Activated T-helper 1 cell treated with anti-CD3 and anti-CD28 coated beads, Interleukin-12 subunit alpha, Interleukin-12 subunit beta, Interleukin-2, Interleukin-4 antibody, amounts not matched to agents 30 ng/mL and 10 ng/mL and 1 ng/mL, durations not matched to agents 14 hours and 24 hours and 36 hours (primary cell): ENCODE measurements at regions of chr11 and their contacts with region 1.

Region 1: GRCh38 chr11:10455637-10456487 is 798 bp downstream of the AMPD3 start:
- DNase-seq: peak; percentile 72
- H3K4me3 Mint-ChIP-seq: peak overlapping the region; percentile 86
- H3K27ac Mint-ChIP-seq: peak overlapping the region; percentile 87
- H3K4me1 Mint-ChIP-seq: peaks cover 80% of the 10 kb centered on the region
- H3K27me3 Mint-ChIP-seq: peaks cover 3% of the 10 kb centered on the region

Region 2: GRCh38 chr11:8688414-8689362 is 1767.2 kb before region 1 on chr11:
- intact Hi-C with region 1: loop called (anchors 10 kb)
- DNase-seq: peak; percentile 82
- H3K4me3 Mint-ChIP-seq: peak overlapping the region; percentile 94
- H3K27ac Mint-ChIP-seq: peak overlapping the region; percentile 91
- H3K4me1 Mint-ChIP-seq: peaks cover 60% of the 10 kb centered on the region
- H3K27me3 Mint-ChIP-seq: no peaks in the 10 kb centered on the region

Region 3: GRCh38 chr11:9757809-9758636 is 697.8 kb before region 1 on chr11:
- intact Hi-C with region 1: loop called (anchors 5 kb)
- DNase-seq: peak; percentile 87
- H3K4me3 Mint-ChIP-seq: peak overlapping the region; percentile 80
- H3K27ac Mint-ChIP-seq: peak overlapping the region; percentile 76
- H3K4me1 Mint-ChIP-seq: peaks cover 57% of the 10 kb centered on the region
- H3K27me3 Mint-ChIP-seq: peaks cover 2% of the 10 kb centered on the region

Region 4: GRCh38 chr11:10413268-10413667 is 42.6 kb before region 1 on chr11:
- intact Hi-C with region 1: loop called (anchors 2 kb)
- DNase-seq: peak; percentile 22
- H3K4me3 Mint-ChIP-seq: no peak overlapping the region
- H3K27ac Mint-ChIP-seq: no peak overlapping the region
- H3K4me1 Mint-ChIP-seq: peaks cover 33% of the 10 kb centered on the region
- H3K27me3 Mint-ChIP-seq: peaks cover 11% of the 10 kb centered on the region

Region 5: GRCh38 chr11:10490398-10491241 is 34.8 kb after region 1 on chr11:
- intact Hi-C with region 1: no loop called
- DNase-seq: no peak
- H3K4me3 Mint-ChIP-seq: no peak overlapping the region
- H3K27ac Mint-ChIP-seq: no peak overlapping the region
- H3K4me1 Mint-ChIP-seq: peaks cover 26% of the 10 kb centered on the region
- H3K27me3 Mint-ChIP-seq: no peaks in the 10 kb centered on the region

Region 6: DNA sequence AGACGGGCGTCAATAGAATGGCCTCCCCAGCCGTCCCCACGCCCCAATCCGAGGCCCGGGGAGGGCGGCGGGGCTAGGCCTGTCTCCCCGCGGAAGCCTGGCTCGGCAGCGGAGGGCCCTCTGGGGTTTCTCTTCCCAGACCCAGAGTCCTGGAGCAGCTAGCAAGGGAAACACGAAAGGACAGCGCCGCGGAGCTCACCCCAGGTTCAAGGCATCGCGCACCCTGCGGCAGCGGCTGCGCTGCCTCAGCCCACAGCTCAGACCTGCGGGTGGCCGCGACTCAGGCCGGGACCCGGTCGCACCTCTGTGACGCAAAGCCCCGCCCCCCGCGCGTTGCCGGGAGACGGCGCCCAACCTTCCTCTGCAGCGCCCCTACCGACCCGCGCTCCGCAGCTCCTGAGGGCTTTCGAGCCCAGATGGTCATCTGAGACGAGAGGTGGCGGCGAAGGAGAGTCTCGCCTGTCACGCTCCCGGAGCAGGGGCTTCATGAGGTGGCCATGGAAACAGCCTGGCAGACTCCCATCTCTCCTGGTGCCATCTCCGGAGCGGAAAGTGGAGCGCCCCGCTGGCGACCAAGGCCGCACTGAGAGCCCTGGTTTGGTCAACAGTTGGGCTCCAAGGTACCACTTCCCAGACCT is 85.2 kb after region 1 on chr11 and contains the start of gene RNF141:
- intact Hi-C with region 1: loop called (anchors 1 kb)
- DNase-seq: peak; percentile 92
- H3K4me3 Mint-ChIP-seq: peak within 1 kb of the TSS; percentile 90
- H3K27ac Mint-ChIP-seq: peak within 1 kb of the TSS; percentile 73
- H3K4me1 Mint-ChIP-seq: peaks cover 29% of the 10 kb centered on the region
- H3K27me3 Mint-ChIP-seq: peaks cover 5% of the 10 kb centered on the region
- total RNA-seq, gene RNF141: 12.4 and 13.2 TPM in 2 replicates

Region 7: DNA sequence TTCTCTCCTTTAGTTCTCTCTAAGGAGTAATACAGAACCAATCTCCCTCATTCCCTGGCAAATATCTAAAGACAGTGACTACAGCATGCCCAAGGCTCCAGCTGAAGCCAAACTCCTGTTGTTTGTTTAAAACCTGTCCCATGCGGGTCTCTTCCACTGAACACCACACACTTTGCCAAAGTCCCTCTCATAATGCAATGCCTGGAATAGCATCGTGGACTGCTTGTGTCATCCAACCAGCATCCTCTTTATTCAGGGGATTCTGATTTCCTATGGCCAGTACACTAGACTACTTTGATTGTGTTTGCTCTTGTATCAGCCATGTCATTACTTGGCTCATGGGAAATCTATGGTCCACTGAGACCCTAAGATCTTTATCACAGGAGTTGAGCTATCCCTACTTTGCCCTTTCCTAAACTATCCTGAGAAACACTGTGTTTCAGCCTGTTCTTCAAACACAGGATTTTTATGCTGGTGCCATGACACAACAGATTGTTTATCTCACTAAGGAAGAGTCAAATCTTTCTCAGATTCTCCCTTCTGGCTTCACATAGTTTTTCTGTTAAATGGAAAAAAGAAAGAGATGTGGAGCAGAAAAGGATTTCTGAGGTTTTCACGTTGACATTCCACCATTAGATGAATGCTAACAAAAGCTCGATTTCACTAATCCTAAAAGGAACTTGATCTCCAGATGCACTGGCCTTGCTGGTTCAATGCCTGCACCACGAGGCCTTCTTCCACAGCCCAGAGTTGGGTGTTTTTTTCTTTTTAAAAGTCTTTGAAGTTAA is 253.6 kb after region 1 on chr11:
- intact Hi-C with region 1: no loop called
- DNase-seq: no peak
- H3K4me3 Mint-ChIP-seq: no peak overlapping the region
- H3K27ac Mint-ChIP-seq: no peak overlapping the region
- H3K4me1 Mint-ChIP-seq: no peaks in the 10 kb centered on the region
- H3K27me3 Mint-ChIP-seq: peaks cover 4% of the 10 kb centered on the region

Region 8: DNA sequence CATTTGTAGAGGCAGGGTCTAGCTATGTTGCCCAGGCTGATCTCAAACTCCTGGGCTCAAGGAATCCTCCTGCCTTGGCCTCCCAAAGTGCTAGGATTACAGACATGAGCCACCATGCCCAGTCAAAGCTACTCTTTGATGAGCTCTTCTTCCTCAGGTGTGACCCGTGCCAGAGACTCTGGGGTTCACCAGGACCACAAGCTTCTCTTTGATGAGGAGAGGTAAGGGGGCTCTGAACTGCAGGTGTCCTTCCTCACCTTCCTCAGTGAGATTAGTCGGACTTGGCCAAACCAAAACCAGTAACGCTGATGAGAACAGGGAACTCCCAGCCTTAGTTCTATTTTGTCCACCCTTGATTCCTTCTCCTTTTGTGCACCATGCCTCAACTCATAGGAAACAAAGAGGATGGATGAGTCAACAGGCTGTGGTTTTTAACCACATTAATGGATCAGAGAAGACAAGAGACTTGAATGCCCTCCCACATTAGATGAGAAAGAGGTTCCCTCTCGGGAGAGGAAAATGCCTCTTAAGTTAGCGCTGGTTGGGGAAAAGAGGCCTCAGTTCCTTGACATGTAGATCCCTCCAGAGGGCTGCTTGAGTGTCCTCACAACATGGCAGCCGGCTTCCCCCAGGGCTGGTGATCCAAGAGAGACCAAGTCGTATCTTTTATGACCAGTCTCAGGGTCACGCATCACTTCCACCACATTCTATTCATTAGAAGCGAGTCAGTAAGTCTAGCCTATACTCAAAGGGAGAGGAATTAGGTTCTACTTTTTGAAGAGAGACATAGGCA is 269.4 kb after region 1 on chr11:
- intact Hi-C with region 1: loop called (anchors 1 kb)
- DNase-seq: no peak
- H3K4me3 Mint-ChIP-seq: peak overlapping the region; percentile 47
- H3K27ac Mint-ChIP-seq: peak overlapping the region; percentile 61
- H3K4me1 Mint-ChIP-seq: peaks cover 24% of the 10 kb centered on the region
- H3K27me3 Mint-ChIP-seq: peaks cover 22% of the 10 kb centered on the region

Region 9: DNA sequence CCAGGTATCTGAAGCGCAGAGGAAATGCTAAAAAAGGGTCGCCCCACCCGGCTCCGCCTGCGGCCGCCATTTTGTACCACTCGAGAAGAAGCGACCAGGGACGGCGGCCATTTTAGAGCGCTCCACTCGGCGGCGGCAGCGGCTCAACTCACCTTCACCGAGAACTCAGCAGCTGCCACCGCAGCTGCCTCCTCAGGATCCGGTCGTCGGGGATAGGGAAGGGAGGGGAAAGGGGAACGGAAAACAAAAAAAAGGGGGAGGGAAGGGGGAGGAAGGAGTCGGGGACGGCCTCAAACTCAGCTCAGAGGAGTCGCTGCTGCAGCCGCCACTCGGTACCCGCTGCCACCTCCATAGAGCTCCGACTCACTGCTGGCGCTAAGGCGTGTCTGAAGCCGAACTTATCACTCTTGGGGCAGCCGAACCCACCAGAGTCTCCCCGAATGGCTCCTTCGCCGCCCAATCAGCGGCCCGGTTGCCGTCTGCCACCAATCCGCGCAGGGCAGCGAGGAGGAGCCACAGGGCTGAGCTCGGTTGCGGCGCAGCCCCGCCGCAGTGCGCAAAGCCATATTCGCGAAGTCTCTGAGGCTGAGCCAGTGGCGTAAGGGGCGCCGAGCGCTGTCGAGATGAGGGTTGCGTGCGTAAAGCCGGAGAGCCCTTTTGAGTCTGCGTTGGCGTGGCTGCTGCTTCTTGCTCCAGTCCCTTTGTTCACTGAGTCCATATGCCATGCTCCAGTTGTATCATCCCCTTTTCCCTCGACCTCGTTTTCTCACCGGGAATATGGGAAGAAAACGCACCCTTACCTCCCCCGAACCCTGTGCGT is 352.9 kb after region 1 on chr11 and contains the start of gene EIF4G2:
- intact Hi-C with region 1: loop called (anchors 2 kb)
- DNase-seq: peak; percentile 98
- H3K4me3 Mint-ChIP-seq: peak within 1 kb of the TSS; percentile 95
- H3K27ac Mint-ChIP-seq: peak within 1 kb of the TSS; percentile 98
- H3K4me1 Mint-ChIP-seq: peaks cover 43% of the 10 kb centered on the region
- H3K27me3 Mint-ChIP-seq: no peaks in the 10 kb centered on the region
- total RNA-seq, gene EIF4G2: 1,084 and 1,108 TPM in 2 replicates